Activated CD4-positive, alpha-beta memory T cell treated with anti-CD3 and anti-CD28 coated beads, Interleukin-2, amount 10 ng/mL, durations not matched to agents 7 days and 5 days (primary cell): ENCODE measurements at regions of chr14 and their contacts with region 1.

Region 1: DNA sequence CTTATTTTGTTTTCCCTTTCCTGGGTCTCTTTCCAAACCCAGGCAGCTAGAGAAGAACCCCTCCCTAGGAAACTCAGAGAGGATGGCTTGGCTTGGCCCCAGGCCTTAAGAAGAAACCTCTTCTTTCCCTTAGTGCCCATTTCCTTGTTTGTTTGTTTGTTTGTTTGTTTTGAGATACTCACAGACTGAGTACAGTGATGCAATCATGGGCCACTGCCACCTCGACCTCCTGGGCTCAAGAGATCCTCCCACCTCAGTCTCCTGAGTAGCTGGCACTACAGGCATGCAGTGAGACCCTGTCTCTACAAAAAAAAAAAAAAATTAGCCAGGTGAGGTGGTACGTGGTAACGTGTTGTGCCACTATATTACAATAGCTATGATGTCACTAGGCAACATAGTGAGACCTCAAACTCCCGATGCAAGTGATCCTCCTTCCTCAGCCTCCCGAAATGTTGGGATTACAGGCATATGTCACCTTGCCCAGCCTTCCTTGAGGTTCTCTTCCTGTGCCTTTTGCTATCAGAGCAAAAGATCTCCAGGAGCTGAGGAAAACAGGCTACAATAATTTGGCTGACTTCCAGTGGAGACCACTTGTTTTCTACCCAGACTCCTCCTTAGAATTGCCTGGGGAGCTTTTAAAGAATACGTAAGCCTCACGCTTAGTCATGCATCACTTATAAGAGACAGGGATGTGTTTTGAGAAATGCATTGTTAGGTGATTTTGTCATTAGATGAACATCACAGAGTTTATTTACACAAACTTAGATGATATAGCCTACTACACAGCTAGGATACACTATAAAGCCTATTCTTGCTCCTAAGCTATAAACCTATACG is 34.5 kb upstream of the LGALS3 start:
- DNase-seq: no peak
- H3K4me3 Mint-ChIP-seq: no peak overlapping the region
- H3K27ac Mint-ChIP-seq: no peak overlapping the region
- H3K4me1 Mint-ChIP-seq: peaks cover 43% of the 10 kb centered on the region
- H3K27me3 Mint-ChIP-seq: no peaks in the 10 kb centered on the region

Region 2: GRCh38 chr14:55129428-55130195 is 35.1 kb after region 1 on chr14:
- CTCF ChIA-PET with region 1: interaction called, 12 read pairs
- POLR2A ChIA-PET with region 1: interaction called, 19 read pairs
- DNase-seq: peak; percentile 63
- H3K4me3 Mint-ChIP-seq: peak overlapping the region; percentile 75
- H3K27ac Mint-ChIP-seq: peak overlapping the region; percentile 47
- H3K4me1 Mint-ChIP-seq: peaks cover 58% of the 10 kb centered on the region
- H3K27me3 Mint-ChIP-seq: peaks cover 10% of the 10 kb centered on the region

Region 3: GRCh38 chr14:55160989-55161388 is 66.5 kb after region 1 on chr14:
- CTCF ChIA-PET with region 1: interaction called, 32 read pairs
- POLR2A ChIA-PET with region 1: interaction called, 9 read pairs
- DNase-seq: no peak
- H3K4me3 Mint-ChIP-seq: no peak overlapping the region
- H3K27ac Mint-ChIP-seq: no peak overlapping the region
- H3K4me1 Mint-ChIP-seq: peaks cover 20% of the 10 kb centered on the region
- H3K27me3 Mint-ChIP-seq: no peaks in the 10 kb centered on the region

Region 4: GRCh38 chr14:55221968-55222367 is 127.4 kb after region 1 on chr14:
- CTCF ChIA-PET with region 1: no interaction called
- POLR2A ChIA-PET with region 1: no interaction called
- DNase-seq: no peak
- H3K4me3 Mint-ChIP-seq: no peak overlapping the region
- H3K27ac Mint-ChIP-seq: no peak overlapping the region
- H3K4me1 Mint-ChIP-seq: peaks cover 9% of the 10 kb centered on the region
- H3K27me3 Mint-ChIP-seq: no peaks in the 10 kb centered on the region

Region 5: GRCh38 chr14:55245657-55246268 is 151.2 kb after region 1 on chr14:
- CTCF ChIA-PET with region 1: no interaction called
- POLR2A ChIA-PET with region 1: no interaction called
- DNase-seq: no peak
- H3K4me3 Mint-ChIP-seq: no peak overlapping the region
- H3K27ac Mint-ChIP-seq: no peak overlapping the region
- H3K4me1 Mint-ChIP-seq: no peaks in the 10 kb centered on the region
- H3K27me3 Mint-ChIP-seq: peaks cover 25% of the 10 kb centered on the region